ENCODE measurements at regions of chr4 and their contacts with region 1.

Region 1: GRCh38 chr4:102862016-102862415 is 6.8 kb upstream of the CISD2 start:
- DNase-seq: no peak
- ATAC-seq: peak; percentile 38
- H3K4me3 ChIP-seq: no peak overlapping the region
- H3K4me3 Mint-ChIP-seq: no peak overlapping the region
- H3K27ac ChIP-seq: no peak overlapping the region
- H3K27ac Mint-ChIP-seq: no peak overlapping the region
- H3K4me1 ChIP-seq: peaks cover 4 to 5% of the 10 kb centered on the region in 2 donors
- H3K4me1 Mint-ChIP-seq: peaks cover 16 to 35% (median 34%) of the 10 kb centered on the region in 7 donors
- H3K27me3 ChIP-seq: no peaks in the 10 kb centered on the region
- H3K27me3 Mint-ChIP-seq: no peaks in the 10 kb centered on the region

Region 2: GRCh38 chr4:102344954-102345794 is 516.8 kb before region 1 on chr4 and contains the start of gene SLC39A8:
- CTCF ChIA-PET with region 1: no interaction called
- POLR2A ChIA-PET with region 1: no interaction called
- intact Hi-C with region 1: no loop called
- DNase-seq: peak; percentile 75 to 91 (median 89)
- ATAC-seq: peak; percentile 87
- H3K4me3 ChIP-seq: peak within 1 kb of the TSS; percentile 87
- H3K4me3 Mint-ChIP-seq: peak within 1 kb of the TSS; percentile 87 to 97 (median 90)
- H3K27ac ChIP-seq: peak within 1 kb of the TSS; percentile 95
- H3K27ac Mint-ChIP-seq: peak within 1 kb of the TSS; percentile 91 to 98 (median 95)
- H3K4me1 ChIP-seq: peaks cover 15 to 37% of the 10 kb centered on the region in 2 donors
- H3K4me1 Mint-ChIP-seq: peaks cover 24 to 51% (median 46%) of the 10 kb centered on the region in 7 donors
- H3K27me3 ChIP-seq: no peaks in the 10 kb centered on the region
- H3K27me3 Mint-ChIP-seq: peaks cover 0 to 7% (median 0%) of the 10 kb centered on the region in 5 donors
- total RNA-seq, gene SLC39A8: 15.1 to 99.5 (median 17.8) TPM

Region 3: DNA sequence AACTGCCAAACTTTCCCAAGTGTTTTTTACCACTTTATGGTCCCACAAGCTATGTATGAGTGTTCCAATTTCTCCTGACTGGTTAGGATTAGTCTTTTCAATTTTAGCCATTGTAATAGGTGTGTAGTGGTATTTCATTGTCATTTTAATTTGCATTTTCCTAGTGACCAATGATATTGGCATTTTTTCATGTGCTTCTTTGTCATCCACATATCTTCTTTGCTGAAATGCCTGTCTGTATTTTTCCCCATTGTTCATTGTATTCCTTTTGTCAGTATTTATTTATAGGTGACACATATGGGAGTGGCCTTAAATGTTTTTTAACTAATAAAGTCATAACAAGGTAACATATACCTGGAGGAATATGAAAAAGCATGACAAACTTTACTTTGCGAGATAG is 25.4 kb before region 1 on chr4:
- CTCF ChIA-PET with region 1: no interaction called
- POLR2A ChIA-PET with region 1: interaction called, 3 read pairs
- intact Hi-C with region 1: loop called in 1 of 2 experiments (anchors 1 kb)
- DNase-seq: no peak
- ATAC-seq: no peak
- H3K4me3 ChIP-seq: no peak overlapping the region
- H3K4me3 Mint-ChIP-seq: no peak overlapping the region
- H3K27ac ChIP-seq: no peak overlapping the region
- H3K27ac Mint-ChIP-seq: no peak overlapping the region
- H3K4me1 ChIP-seq: no peaks in the 10 kb centered on the region
- H3K4me1 Mint-ChIP-seq: peaks cover 3 to 30% (median 24%) of the 10 kb centered on the region in 7 donors
- H3K27me3 ChIP-seq: no peaks in the 10 kb centered on the region
- H3K27me3 Mint-ChIP-seq: no peaks in the 10 kb centered on the region